ENCODE measurements at regions of chr11 and their contacts with region 1.

Region 1: GRCh38 chr11:65779851-65780577 is 762 bp downstream of the AP5B1 start:
- DNase-seq: peak; percentile 89
- ATAC-seq: peak; percentile 80
- H3K4me3 Mint-ChIP-seq: peak overlapping the region; percentile 87
- H3K27ac Mint-ChIP-seq: peak overlapping the region; percentile 88
- H3K4me1 Mint-ChIP-seq: peaks cover 17% of the 10 kb centered on the region
- H3K27me3 Mint-ChIP-seq: peaks cover 8% of the 10 kb centered on the region

Region 2: DNA sequence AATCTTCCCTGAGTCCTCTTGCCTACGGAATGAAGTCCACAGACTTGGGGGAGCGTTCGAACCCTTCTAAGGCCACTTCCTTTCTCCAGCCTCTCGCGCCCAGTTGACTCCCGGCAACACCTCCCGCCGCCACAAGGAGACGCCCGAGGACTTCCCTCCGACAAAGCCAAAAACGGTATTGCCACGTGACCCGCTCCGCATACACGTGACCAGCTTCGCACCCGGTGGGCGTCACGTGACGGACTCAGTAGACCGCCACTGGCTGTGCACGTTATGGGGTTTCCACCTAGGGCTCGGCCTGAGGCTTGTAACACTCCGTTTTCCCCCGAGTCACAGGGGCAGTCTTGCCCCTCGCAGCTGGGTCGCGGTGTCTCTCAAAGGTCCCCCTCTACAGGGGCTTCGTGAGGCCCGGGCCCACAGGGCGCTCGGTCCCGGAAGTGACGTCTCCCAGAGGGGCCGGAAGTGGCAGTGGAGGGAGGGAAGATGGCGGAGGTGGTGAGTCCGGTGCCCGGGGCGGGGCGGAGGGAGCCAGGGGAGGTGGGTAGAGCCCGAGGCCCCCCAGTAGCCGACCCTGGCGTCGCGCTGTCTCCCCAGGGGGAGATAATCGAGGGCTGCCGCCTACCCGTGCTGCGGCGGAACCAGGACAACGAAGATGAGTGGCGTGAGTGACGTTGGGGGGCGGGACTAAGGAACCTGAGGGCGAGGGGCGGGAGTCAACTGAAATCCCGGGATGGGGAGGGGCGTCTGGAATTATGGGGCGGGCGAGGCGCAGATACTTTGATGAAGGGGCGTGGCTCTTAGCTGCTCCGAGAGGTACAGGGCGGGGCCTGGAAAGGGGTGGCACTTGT is 68.0 kb before region 1 on chr11 and contains the start of gene KAT5:
- CTCF ChIA-PET with region 1: interaction called, 35 read pairs
- POLR2A ChIA-PET with region 1: interaction called, 14 read pairs
- DNase-seq: peak; percentile 99
- ATAC-seq: peak; percentile 86
- H3K4me3 Mint-ChIP-seq: peak within 1 kb of the TSS; percentile 85
- H3K27ac Mint-ChIP-seq: peak within 1 kb of the TSS; percentile 99
- H3K4me1 Mint-ChIP-seq: peaks cover 30% of the 10 kb centered on the region
- H3K27me3 Mint-ChIP-seq: no peaks in the 10 kb centered on the region
- total RNA-seq, gene KAT5: 63.2 to 68.7 TPM

Region 3: GRCh38 chr11:65726660-65727059 is 53.4 kb before region 1 on chr11:
- CTCF ChIA-PET with region 1: interaction called, 16 read pairs
- POLR2A ChIA-PET with region 1: interaction called, 3 read pairs
- DNase-seq: no peak
- ATAC-seq: no peak
- H3K4me3 Mint-ChIP-seq: no peak overlapping the region
- H3K27ac Mint-ChIP-seq: no peak overlapping the region
- H3K4me1 Mint-ChIP-seq: peaks cover 5% of the 10 kb centered on the region
- H3K27me3 Mint-ChIP-seq: peaks cover 5% of the 10 kb centered on the region

Region 4: GRCh38 chr11:65766535-65766934 is 13.5 kb before region 1 on chr11:
- CTCF ChIA-PET with region 1: interaction called, 49 read pairs
- POLR2A ChIA-PET with region 1: interaction called, 5 read pairs
- DNase-seq: peak; percentile 9
- ATAC-seq: no peak
- H3K4me3 Mint-ChIP-seq: no peak overlapping the region
- H3K27ac Mint-ChIP-seq: no peak overlapping the region
- H3K4me1 Mint-ChIP-seq: peaks cover 6% of the 10 kb centered on the region
- H3K27me3 Mint-ChIP-seq: peaks cover 1% of the 10 kb centered on the region

Region 5: GRCh38 chr11:65802841-65803240 is 22.8 kb after region 1 on chr11:
- CTCF ChIA-PET with region 1: interaction called, 34 read pairs
- POLR2A ChIA-PET with region 1: interaction called, 4 read pairs
- DNase-seq: no peak
- ATAC-seq: no peak
- H3K4me3 Mint-ChIP-seq: no peak overlapping the region
- H3K27ac Mint-ChIP-seq: no peak overlapping the region
- H3K4me1 Mint-ChIP-seq: peaks cover 14% of the 10 kb centered on the region
- H3K27me3 Mint-ChIP-seq: peaks cover 16% of the 10 kb centered on the region

Region 6: DNA sequence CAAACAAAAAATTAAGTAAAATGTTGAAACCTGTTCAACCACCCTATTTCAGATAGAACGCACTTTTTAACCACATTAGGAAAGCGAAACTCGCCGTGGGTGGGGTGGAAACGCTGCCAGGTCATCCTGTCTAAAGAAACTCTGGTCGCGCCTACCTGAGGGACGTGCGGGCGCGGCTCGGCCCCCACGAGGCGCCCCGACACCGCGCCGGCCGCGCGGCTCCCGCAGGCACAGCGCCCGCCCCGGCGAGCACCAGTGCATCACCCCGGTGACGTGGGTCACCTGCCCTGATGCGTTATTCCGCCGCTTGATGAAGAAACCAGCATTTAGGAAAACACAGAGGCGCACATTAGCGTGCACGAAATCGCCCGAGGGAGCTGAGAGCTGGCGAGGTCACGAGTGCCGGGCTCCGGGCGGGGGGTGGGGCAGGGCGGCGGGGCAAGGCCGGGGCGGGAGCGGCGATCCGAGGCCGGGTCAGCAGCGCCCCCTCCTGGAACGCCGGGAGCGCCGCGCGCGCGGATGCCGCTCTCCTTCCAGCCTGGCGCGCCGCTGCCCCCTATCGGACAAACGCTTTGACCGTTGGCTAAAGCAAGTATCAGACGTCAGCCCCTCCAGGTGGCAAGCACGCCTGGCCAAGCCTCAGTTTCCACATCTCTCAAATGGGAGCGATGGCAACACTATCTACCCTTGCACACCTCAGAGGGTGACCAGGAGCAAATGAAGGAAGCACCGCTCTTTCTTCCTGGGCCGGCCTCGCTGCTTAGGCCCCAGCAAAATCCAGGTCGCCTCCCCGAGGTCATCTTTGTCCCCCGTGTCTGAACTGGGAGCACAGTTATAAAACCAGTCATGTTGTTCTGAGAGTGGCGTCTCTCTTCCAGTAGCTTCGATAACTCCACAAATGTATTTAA is 38.1 kb after region 1 on chr11:
- CTCF ChIA-PET with region 1: interaction called, 210 read pairs
- POLR2A ChIA-PET with region 1: interaction called, 8 read pairs
- DNase-seq: peak; percentile 96
- ATAC-seq: peak; percentile 93
- H3K4me3 Mint-ChIP-seq: peak overlapping the region; percentile 76
- H3K27ac Mint-ChIP-seq: peak overlapping the region; percentile 75
- H3K4me1 Mint-ChIP-seq: peaks cover 20% of the 10 kb centered on the region
- H3K27me3 Mint-ChIP-seq: peaks cover 4% of the 10 kb centered on the region

Region 7: GRCh38 chr11:65859200-65859811 is 79.3 kb after region 1 on chr11:
- CTCF ChIA-PET with region 1: interaction called, 12 read pairs
- POLR2A ChIA-PET with region 1: interaction called, 11 read pairs
- DNase-seq: peak; percentile 100
- ATAC-seq: peak; percentile 72
- H3K4me3 Mint-ChIP-seq: peak overlapping the region; percentile 89
- H3K27ac Mint-ChIP-seq: peak overlapping the region; percentile 97
- H3K4me1 Mint-ChIP-seq: peaks cover 58% of the 10 kb centered on the region
- H3K27me3 Mint-ChIP-seq: no peaks in the 10 kb centered on the region

Measured in activated CD8-positive, alpha-beta T cell treated with anti-CD3 and anti-CD28 coated beads, Interleukin-2, amount 10 ng/mL, durations not matched to agents 7 days and 5 days (primary cell).